Transverse colon (tissue), 4 donors: ENCODE measurements at regions of chr14 and their contacts with region 1.

Region 1: GRCh38 chr14:64636208-64636979 is 67.8 kb upstream of the PLEKHG3 start:
- DNase-seq: peak; percentile 85
- H3K4me3 ChIP-seq: no peak overlapping the region
- H3K27ac ChIP-seq: peak overlapping the region; percentile 35 to 54 (median 42)
- H3K4me1 ChIP-seq: peaks cover 9 to 33% (median 25%) of the 10 kb centered on the region in 4 donors
- H3K27me3 ChIP-seq: no peaks in the 10 kb centered on the region
- CTCF ChIP-seq: peak; percentile 89 to 96 (median 93)
- EP300 ChIP-seq: no peak
- POLR2A ChIP-seq: no peak

Region 2: DNA sequence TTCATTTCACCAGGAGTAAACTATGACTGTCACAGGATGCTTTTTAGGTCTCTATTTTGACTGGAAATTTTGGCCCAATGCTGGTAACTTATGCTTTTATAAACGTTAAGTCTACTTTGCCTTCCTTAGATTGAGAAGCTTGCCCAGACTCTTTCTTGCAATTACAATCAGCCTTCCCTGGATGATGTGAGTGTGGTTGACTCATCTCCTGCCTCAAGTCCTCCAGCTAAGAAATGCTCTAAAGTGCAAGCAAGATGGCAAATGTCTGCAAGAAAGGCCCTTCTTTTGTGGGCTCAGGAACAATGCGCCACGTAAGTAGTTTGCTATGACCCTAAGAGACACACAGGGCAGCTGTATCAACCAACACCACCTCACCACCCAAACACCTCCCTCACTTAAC is 686.7 kb before region 1 on chr14:
- in situ Hi-C with region 1: no loop called
- intact Hi-C with region 1: no loop called
- DNase-seq: no peak
- H3K4me3 ChIP-seq: no peak overlapping the region
- H3K27ac ChIP-seq: no peak overlapping the region
- H3K4me1 ChIP-seq: peaks cover 0 to 31% (median 15%) of the 10 kb centered on the region in 4 donors
- H3K27me3 ChIP-seq: no peaks in the 10 kb centered on the region
- CTCF ChIP-seq: no peak
- EP300 ChIP-seq: no peak
- POLR2A ChIP-seq: no peak

Region 3: DNA sequence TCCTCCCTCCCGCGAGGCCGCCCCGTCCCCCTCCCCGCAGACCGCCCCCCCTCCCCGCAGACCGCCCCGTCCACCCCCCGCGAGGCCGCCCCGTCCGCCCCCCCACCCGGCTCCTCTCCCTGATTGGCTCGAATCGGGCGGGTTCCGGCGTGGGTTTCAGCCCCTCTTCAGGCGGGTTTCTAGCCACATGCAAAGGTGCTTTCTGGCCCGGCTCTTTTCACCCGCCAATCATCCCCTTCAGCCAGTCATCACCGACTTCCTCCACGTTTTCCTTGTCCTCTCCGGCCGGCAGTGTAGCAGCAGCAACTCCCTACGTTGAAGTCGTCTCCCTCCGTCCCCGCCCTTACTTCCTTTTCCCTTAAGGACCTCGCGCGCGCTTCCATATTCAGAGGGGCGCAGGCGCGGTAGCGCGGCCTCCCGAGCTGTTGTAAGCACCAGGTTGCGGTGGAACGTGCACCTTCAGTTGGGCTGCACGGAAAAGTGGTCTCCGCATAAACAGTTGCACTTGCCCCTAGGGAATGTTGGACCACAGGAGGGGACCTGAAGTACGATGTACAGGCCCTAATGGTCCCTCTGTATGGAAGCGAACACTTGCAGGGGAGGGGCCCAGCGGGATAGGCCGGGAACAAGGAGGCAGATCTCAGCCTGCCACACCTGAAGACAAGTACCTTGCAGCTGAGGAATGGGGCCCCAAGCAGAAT is 297.6 kb before region 1 on chr14:
- in situ Hi-C with region 1: loop called in 2 of 4 experiments (anchors 25 kb)
- intact Hi-C with region 1: no loop called
- DNase-seq: peak; percentile 96
- H3K4me3 ChIP-seq: peak overlapping the region; percentile 55 to 80 (median 71)
- H3K27ac ChIP-seq: peak overlapping the region; percentile 86 to 95 (median 90)
- H3K4me1 ChIP-seq: peaks cover 0 to 12% (median 5%) of the 10 kb centered on the region in 4 donors
- H3K27me3 ChIP-seq: no peaks in the 10 kb centered on the region
- CTCF ChIP-seq: no peak
- EP300 ChIP-seq: no peak
- POLR2A ChIP-seq: peak; percentile 72

Region 4: DNA sequence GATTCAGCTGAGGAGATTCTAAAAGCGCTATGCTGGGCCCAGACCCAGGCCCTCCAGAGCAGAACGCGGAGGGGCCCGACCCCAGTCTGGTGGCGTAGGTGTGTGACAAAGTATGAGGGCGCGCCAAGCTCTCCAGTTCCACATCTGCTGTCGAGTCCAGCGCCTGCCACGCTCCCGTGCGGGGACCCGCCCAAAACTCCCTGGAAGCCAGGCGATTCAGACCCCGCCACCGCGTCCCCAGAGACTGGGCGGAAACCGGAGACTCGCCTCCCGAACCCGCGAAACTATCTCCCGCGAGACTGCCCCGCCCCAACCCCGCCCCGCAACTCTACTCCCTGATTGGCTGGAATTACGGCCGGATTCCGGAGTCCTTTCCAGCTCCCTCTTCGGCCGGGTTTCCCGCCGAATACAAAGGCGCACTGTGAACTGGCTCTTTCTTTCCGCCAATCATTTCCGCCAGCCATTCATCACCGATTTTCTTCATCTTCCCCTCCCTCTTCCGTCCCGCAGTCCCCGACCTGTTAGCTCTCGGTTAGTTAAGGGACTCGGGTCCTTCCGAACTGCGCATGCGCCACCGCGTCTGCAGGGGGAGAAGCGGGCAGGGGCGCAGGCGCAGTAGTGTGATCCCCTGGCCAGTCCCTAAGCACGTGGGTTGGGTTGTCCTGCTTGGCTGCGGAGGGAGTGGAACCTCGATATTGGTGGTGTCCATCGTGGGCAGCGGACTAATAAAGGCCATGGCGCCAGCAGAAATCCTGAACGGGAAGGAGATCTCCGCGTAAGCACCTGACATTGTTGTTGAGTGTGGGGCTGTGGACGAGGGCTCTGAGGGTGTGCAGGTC is 248.5 kb before region 1 on chr14 and contains the start of gene MTHFD1:
- in situ Hi-C with region 1: loop called in 1 of 4 experiments (anchors 25 kb)
- intact Hi-C with region 1: no loop called
- DNase-seq: peak; percentile 99
- H3K4me3 ChIP-seq: peak within 1 kb of the TSS; percentile 46 to 77 (median 66)
- H3K27ac ChIP-seq: peak within 1 kb of the TSS; percentile 82 to 90 (median 88)
- H3K4me1 ChIP-seq: peaks cover 2 to 24% (median 17%) of the 10 kb centered on the region in 4 donors
- H3K27me3 ChIP-seq: no peaks in the 10 kb centered on the region
- CTCF ChIP-seq: peak in 1 of 5 experiments; percentile 46
- EP300 ChIP-seq: no peak
- POLR2A ChIP-seq: peak; percentile 57
- total RNA-seq, gene MTHFD1: 20.5 to 92.0 (median 37.7) TPM

Region 5: DNA sequence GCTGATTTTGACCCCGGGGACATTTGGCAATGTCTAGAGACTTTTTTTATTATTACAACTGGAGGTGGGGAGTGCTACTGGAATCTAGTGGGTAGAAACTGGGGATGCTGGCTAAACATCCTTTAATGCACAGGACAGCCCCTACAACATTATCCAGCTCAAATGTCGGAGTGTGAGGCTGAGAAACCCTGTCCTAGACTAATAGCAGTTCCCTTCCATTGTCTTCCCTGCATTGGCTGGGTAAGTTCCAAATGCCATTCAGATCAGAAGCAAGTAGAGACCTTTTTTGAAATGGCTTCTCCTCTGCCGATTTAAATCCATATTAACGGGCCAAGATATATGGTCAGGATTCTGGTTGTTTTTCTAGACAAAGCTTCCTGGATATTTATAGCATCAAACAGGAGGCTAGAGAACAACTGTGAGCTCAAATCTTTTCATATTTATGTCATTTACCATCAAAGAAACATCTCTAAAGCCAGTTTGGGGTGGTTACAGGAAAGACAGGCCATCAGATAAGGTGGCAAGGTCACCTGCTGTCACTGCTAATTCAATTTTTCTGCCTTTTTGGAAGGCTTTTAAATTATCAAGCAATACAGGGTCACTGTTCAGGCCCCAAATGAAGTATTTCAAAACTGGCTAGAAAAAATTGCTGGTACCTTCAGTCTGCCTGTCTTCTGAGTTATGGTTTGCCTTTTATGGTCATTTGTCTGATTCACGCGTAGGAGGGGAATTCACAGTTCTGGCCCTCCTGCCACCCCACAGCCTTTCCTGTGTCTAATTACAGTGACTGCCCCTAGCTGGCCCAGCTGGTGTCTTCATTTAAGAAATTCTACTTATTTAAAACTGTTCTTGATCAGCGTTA is 191.2 kb before region 1 on chr14:
- in situ Hi-C with region 1: loop called in 1 of 4 experiments (anchors 25 kb)
- intact Hi-C with region 1: no loop called
- DNase-seq: peak; percentile 45
- H3K4me3 ChIP-seq: no peak overlapping the region
- H3K27ac ChIP-seq: peak overlapping the region; percentile 7 to 68 (median 39)
- H3K4me1 ChIP-seq: peaks cover 0 to 13% (median 4%) of the 10 kb centered on the region in 4 donors
- H3K27me3 ChIP-seq: no peaks in the 10 kb centered on the region
- CTCF ChIP-seq: no peak
- EP300 ChIP-seq: no peak
- POLR2A ChIP-seq: no peak

Region 6: GRCh38 chr14:64496764-64497163 is 139.6 kb before region 1 on chr14:
- in situ Hi-C with region 1: no loop called
- intact Hi-C with region 1: no loop called
- DNase-seq: no peak
- H3K4me3 ChIP-seq: no peak overlapping the region
- H3K27ac ChIP-seq: no peak overlapping the region
- H3K4me1 ChIP-seq: peaks cover 5 to 26% (median 20%) of the 10 kb centered on the region in 4 donors
- H3K27me3 ChIP-seq: no peaks in the 10 kb centered on the region
- CTCF ChIP-seq: no peak
- EP300 ChIP-seq: no peak
- POLR2A ChIP-seq: no peak